HCT116 (cell line): ENCODE measurements at regions of chr11 and their contacts with region 1.

Region 1: GRCh38 chr11:76799066-76799804 is 16.1 kb downstream of the TSKU start:
- DNase-seq: no peak
- ATAC-seq: peak; percentile 97
- H3K4me3 ChIP-seq: no peak overlapping the region
- H3K27ac ChIP-seq: no peak overlapping the region; the same call in 1 of the 2 replicates
- H3K4me1 ChIP-seq: peaks cover 7 to 10% of the 10 kb centered on the region in 2 experiments; a peak in 3 of 4 replicates
- H3K27me3 ChIP-seq: no peaks in the 10 kb centered on the region
- CTCF ChIP-seq: peak; percentile 80 to 90 (median 89)
- POLR2A ChIP-seq: no peak
- RAD21 ChIP-seq: peak; percentile 94

Region 2: DNA sequence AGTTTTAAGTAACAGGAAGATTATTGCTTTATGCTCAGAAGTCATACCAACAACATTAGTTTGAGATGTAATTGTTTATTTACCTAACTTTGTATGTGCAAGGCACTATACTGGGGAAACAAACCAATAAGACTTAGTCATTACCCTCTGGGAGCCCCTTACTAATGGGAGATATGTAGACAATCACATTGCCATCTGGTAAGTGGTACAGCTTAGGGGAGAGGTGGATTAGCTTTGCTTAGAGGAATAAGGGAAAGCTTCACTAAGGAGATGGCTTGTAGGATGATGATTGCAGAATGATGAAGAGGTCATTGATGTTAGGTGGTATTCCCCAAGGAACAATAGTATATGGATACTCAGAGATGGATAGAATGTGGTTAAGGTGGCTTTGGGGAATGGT is 336.9 kb before region 1 on chr11:
- CTCF ChIA-PET with region 1: no interaction called
- POLR2A ChIA-PET with region 1: no interaction called
- RAD21 ChIA-PET with region 1: no interaction called
- intact Hi-C with region 1: no loop called
- DNase-seq: no peak
- ATAC-seq: no peak
- H3K4me3 ChIP-seq: no peak overlapping the region
- H3K27ac ChIP-seq: no peak overlapping the region
- H3K4me1 ChIP-seq: 0 out of 4 replicates have a peak, but pooled peaks cover 0 to 3% of the 10 kb centered on the region in 2 experiments
- H3K27me3 ChIP-seq: no peaks in the 10 kb centered on the region
- CTCF ChIP-seq: no peak
- POLR2A ChIP-seq: no peak
- RAD21 ChIP-seq: no peak

Region 3: DNA sequence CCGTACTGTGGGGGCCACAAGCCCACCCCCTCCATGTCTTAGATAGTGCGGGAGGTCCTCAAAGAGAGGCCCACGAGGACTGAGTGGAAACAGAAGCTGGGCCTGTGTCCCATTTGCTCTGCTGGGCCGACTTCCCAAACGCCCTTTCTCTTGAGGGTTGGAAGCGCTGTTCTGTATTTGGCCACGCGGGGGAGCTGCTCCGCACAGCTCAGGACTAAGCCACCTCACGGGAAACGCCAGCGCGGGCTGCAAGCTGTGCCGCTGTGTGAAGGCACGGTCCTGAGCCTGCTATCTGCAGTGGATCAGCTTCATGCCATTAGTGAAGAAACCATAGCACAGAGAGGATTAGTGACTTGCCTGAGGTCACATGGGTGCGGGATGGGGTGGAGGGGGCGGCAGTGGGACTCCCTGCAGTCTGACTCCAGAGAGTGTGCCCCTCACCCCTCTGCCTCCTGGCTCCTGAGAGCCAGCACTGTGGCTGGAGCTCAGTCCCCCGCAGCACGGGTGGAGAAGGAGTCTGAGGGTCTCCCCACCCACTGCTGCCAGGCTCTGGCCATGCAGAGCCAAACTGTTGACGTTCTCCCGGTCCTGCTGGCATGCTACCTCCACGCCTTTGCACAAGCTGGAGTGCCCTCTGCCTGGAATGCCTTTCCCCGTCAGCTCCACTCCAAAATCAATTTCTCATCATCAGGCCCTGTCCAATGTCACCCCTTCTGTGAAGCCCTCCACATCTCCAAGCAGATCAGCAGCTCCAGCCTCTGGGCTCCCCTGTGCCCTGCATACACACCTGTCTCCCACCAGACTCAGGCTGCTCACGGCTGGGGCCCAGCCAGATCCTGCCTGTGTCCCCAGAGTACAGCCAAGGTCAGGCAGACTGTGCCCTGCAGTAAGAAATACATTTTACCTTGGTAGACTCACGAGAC is 77.2 kb before region 1 on chr11:
- CTCF ChIA-PET with region 1: interaction called, 12 read pairs
- POLR2A ChIA-PET with region 1: no interaction called
- RAD21 ChIA-PET with region 1: no interaction called
- intact Hi-C with region 1: no loop called
- DNase-seq: peak; percentile 68
- ATAC-seq: peak; percentile 98
- H3K4me3 ChIP-seq: peak overlapping the region; percentile 13 to 27
- H3K27ac ChIP-seq: no peak overlapping the region
- H3K4me1 ChIP-seq: peaks cover 0 to 10% of the 10 kb centered on the region in 2 experiments; a peak in 2 of 4 replicates
- H3K27me3 ChIP-seq: peaks cover 41% of the 10 kb centered on the region
- CTCF ChIP-seq: peak; percentile 77 to 95 (median 88)
- POLR2A ChIP-seq: no peak
- RAD21 ChIP-seq: peak; percentile 72

Region 4: GRCh38 chr11:76734456-76735420 is 64.5 kb before region 1 on chr11:
- CTCF ChIA-PET with region 1: interaction called, 40 read pairs
- POLR2A ChIA-PET with region 1: interaction called, 12 read pairs
- RAD21 ChIA-PET with region 1: interaction called, 10 to 11 read pairs
- intact Hi-C with region 1: loop called (anchors 1 kb)
- DNase-seq: no peak
- ATAC-seq: no peak
- H3K4me3 ChIP-seq: no peak overlapping the region
- H3K27ac ChIP-seq: no peak overlapping the region
- H3K4me1 ChIP-seq: no peaks in the 10 kb centered on the region
- H3K27me3 ChIP-seq: no peaks in the 10 kb centered on the region; the same call in 1 of the 2 replicates
- CTCF ChIP-seq: no peak
- POLR2A ChIP-seq: no peak
- RAD21 ChIP-seq: no peak

Region 5: DNA sequence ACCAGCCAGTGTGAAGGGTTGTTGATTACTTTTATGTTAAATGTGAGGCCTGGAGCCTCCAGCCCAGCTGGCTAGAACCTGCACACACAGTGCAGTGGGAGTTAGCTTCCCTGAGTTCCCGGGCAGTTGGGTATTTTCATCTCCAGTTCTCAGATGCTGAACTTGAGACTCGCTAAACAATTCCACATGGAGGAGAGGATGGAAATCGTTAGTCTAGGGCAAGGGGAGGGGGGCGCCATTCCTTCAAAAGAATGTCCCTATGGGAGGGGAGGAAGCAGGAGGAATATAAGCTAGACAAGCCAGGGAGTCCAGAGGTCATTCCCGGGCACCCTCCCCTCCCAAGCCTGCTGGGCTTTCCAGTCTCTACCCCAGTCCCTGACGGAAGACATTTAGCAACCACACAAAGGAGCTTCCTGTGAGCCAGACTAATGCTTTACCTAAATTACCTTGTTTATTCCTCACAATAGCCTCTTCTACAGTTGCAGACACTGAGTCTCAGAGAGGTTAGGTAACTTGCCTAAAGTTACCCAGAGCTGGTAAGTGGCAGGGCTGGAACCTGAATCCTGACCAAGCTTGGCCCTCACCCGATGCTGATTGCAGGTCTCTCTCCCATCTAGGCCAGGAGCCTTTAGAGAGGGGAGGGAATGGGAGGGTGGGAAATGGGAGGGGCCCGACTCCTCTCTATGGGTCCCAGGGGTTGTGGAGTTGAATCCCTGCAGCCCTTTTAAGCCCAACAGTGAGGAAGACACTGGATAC is 18.0 kb before region 1 on chr11:
- CTCF ChIA-PET with region 1: no interaction called
- POLR2A ChIA-PET with region 1: no interaction called
- RAD21 ChIA-PET with region 1: no interaction called
- intact Hi-C with region 1: no loop called
- DNase-seq: no peak
- ATAC-seq: no peak
- H3K4me3 ChIP-seq: no peak overlapping the region
- H3K27ac ChIP-seq: no peak overlapping the region
- H3K4me1 ChIP-seq: peaks cover 23 to 37% of the 10 kb centered on the region in 2 experiments
- H3K27me3 ChIP-seq: no peaks in the 10 kb centered on the region
- CTCF ChIP-seq: no peak
- POLR2A ChIP-seq: no peak
- RAD21 ChIP-seq: no peak